GM12878 (cell line): ENCODE measurements at regions of chr17 and their contacts with region 1.

Region 1: DNA sequence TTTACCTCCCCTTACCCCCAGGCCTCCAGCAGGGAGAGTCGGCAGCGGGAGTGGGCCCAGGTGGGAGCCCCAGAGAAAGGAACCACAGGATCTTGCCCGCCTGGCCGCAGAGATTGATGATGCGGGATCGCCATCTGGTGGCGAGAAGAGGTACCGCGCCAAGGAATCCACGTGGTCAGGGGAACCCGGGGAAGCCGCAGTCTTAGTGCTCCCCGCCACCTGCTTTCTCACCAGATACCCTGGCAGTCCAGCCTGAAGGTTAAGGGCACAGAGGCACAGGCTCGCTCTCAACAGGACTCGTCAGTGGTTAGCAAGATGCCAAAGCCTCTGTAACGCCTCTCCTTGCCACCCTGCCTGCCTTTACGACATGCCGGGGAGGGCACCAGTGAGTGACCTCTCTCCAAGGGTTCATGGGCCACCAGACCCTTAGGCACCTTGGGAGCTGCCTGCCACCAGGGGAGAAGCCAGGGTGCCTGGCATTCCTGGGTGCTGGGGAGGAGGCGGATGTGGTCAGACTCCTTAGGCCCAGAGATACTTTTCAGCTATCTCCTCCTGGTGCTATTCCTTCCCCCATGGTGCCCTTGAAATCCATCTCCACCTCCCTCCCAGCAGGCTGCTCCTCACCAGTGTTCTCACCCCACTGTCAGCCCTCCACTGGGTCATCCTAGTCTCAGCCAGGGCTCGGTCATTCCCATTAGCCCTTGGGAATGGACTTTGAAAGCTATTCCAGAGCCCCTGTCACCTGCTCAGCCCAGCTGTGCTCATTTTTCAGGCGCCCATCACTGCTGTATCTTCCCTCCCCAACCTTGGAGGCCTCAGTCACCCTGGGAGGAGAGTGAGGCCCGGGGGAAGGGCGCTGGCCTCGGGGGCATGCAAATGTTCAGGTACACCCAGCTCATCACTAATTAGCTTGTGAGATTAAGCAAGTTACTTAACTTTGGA is 5.5 kb upstream of the RHBDF2 start:
- DNase-seq: peak; percentile 40
- ATAC-seq: peak; percentile 92
- H3K4me3 ChIP-seq: no peak overlapping the region
- H3K27ac ChIP-seq: no peak overlapping the region
- H3K4me1 ChIP-seq: peaks cover 9% of the 10 kb centered on the region
- H3K27me3 ChIP-seq: no peaks in the 10 kb centered on the region; a peak in 1 of 4 replicates
- CTCF ChIP-seq: peak; percentile 89 to 99 (median 92); a peak in 5 of 6 replicates
- EP300 ChIP-seq: no peak
- POLR2A ChIP-seq: no peak
- RAD21 ChIP-seq: peak; percentile 97

Region 2: GRCh38 chr17:76307299-76307965 is 199.2 kb before region 1 on chr17:
- CTCF ChIA-PET with region 1: interaction called, 3 read pairs
- POLR2A ChIA-PET with region 1: no interaction called
- RAD21 ChIA-PET with region 1: interaction called, 3 read pairs
- SMC1A ChIA-PET with region 1: interaction called, 3 read pairs
- in situ Hi-C with region 1: loop called (anchors 5 kb)
- intact Hi-C with region 1: loop called (anchors 2 kb)
- DNase-seq: no peak
- ATAC-seq: no peak
- H3K4me3 ChIP-seq: no peak overlapping the region
- H3K27ac ChIP-seq: no peak overlapping the region
- H3K4me1 ChIP-seq: no peaks in the 10 kb centered on the region
- H3K27me3 ChIP-seq: no peaks in the 10 kb centered on the region
- CTCF ChIP-seq: no peak
- EP300 ChIP-seq: no peak
- POLR2A ChIP-seq: no peak
- RAD21 ChIP-seq: no peak

Region 3: GRCh38 chr17:76408052-76408849 is 98.4 kb before region 1 on chr17:
- CTCF ChIA-PET with region 1: interaction called, 26 read pairs
- POLR2A ChIA-PET with region 1: no interaction called
- RAD21 ChIA-PET with region 1: no interaction called
- SMC1A ChIA-PET with region 1: interaction called, 9 read pairs
- in situ Hi-C with region 1: loop called (anchors 5 kb)
- intact Hi-C with region 1: loop called (anchors 1 kb)
- DNase-seq: no peak
- ATAC-seq: peak; percentile 91
- H3K4me3 ChIP-seq: no peak overlapping the region
- H3K27ac ChIP-seq: no peak overlapping the region
- H3K4me1 ChIP-seq: peaks cover 20% of the 10 kb centered on the region
- H3K27me3 ChIP-seq: no peaks in the 10 kb centered on the region
- CTCF ChIP-seq: peak; percentile 87 to 96 (median 91)
- EP300 ChIP-seq: no peak
- POLR2A ChIP-seq: no peak
- RAD21 ChIP-seq: peak; percentile 82

Region 4: DNA sequence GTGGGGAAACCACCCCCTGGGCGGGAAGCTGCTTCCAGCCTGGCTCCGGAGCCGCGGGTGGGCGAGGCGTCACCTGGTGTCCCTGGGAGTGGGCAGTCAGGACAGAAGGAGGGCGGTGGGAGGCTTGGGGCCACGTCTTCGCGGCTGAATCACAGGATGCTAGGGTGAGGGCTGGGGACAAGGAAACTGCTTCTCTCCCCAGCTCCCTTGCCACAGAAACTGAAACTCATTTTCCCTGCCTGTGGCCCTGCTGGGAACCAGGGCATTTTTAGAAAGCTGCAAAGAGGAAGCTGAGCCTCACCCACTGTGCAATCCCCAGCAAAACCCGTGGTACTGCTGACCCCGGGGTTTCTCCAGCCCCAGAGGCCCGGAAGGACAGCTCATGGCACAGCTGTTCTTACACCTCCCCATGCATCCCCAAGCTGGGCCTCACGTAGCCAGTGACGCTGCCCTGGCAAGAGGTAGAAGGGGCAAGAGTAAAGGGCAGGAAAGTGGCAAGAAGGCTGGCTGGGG is 13.6 kb before region 1 on chr17:
- CTCF ChIA-PET with region 1: interaction called, 35 read pairs
- POLR2A ChIA-PET with region 1: interaction called, 27 read pairs
- RAD21 ChIA-PET with region 1: interaction called, 9 read pairs
- SMC1A ChIA-PET with region 1: interaction called, 115 read pairs
- in situ Hi-C with region 1: no loop called
- intact Hi-C with region 1: no loop called
- DNase-seq: peak; percentile 80
- ATAC-seq: peak; percentile 79
- H3K4me3 ChIP-seq: peak overlapping the region; percentile 47; the same call in 1 of the 2 replicates
- H3K27ac ChIP-seq: peak overlapping the region; percentile 80
- H3K4me1 ChIP-seq: peaks cover 67% of the 10 kb centered on the region
- H3K27me3 ChIP-seq: no peaks in the 10 kb centered on the region
- CTCF ChIP-seq: no peak
- EP300 ChIP-seq: no peak; a peak in 1 of 4 replicates
- POLR2A ChIP-seq: peak; percentile 7; the same call in 1 of the 2 replicates
- RAD21 ChIP-seq: no peak

Region 5: DNA sequence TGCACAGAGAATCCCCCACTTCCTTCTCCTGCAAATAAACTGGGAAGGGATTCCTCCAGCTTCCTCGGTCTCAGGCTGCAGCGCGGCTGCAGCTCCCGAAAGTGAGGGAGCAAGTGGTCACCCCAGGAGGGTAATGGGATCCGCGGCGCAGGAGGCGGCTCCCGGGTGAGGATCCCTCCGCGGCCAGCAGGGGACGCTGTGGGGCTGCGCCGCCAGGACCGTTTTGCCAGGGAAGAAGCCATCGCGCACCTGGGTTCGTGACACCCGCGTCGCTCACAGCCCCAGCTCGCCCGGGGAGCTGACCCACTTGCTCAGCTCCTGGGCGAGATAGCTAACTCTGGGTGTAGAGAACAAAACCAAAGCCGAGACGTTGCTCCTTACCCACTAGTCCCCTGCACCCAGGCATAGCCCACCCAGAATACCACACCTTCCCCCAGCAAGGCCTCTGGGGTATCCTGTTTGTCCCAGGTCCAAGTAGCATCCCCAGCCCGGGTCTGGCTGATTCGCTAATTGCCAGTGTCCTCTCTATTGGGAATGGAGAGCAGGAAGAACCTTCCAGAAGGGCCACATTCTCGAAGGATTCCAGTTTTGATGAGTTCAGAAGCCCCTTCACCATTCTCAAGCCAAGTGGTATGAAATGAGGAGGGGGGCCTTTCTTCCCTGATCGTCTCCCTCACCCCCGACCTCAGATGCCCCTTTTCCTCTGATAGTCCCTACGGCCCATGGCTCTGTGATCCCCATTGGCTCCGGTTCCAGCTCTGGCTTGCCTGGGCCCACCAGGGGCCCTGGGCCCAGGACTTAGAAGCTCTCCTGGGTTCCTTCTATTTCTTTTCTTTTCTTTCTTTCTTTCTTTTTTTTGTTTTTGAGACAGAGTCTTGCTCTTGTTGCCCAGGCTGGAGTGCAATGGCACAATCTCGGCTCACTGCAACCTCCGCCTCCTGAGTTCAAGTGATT is 16.7 kb after region 1 on chr17:
- CTCF ChIA-PET with region 1: interaction called, 12 read pairs
- POLR2A ChIA-PET with region 1: interaction called, 3 read pairs
- RAD21 ChIA-PET with region 1: interaction called, 7 read pairs
- SMC1A ChIA-PET with region 1: interaction called, 3 read pairs
- in situ Hi-C with region 1: no loop called
- intact Hi-C with region 1: no loop called
- DNase-seq: no peak
- ATAC-seq: peak; percentile 75
- H3K4me3 ChIP-seq: no peak overlapping the region
- H3K27ac ChIP-seq: no peak overlapping the region
- H3K4me1 ChIP-seq: peaks cover 10% of the 10 kb centered on the region
- H3K27me3 ChIP-seq: no peaks in the 10 kb centered on the region
- CTCF ChIP-seq: peak; percentile 99 to 100 (median 99); a peak in 5 of 6 replicates
- EP300 ChIP-seq: no peak
- POLR2A ChIP-seq: no peak
- RAD21 ChIP-seq: peak; percentile 89

Region 6: GRCh38 chr17:76537578-76538280 is 31.1 kb after region 1 on chr17 and contains the start of gene CYGB:
- CTCF ChIA-PET with region 1: no interaction called
- POLR2A ChIA-PET with region 1: no interaction called
- RAD21 ChIA-PET with region 1: no interaction called
- SMC1A ChIA-PET with region 1: no interaction called
- in situ Hi-C with region 1: no loop called
- intact Hi-C with region 1: no loop called
- DNase-seq: no peak
- ATAC-seq: no peak
- H3K4me3 ChIP-seq: no peak within 1 kb of the TSS
- H3K27ac ChIP-seq: no peak within 1 kb of the TSS
- H3K4me1 ChIP-seq: no peaks in the 10 kb centered on the region
- H3K27me3 ChIP-seq: peaks cover 5 to 6% of the 10 kb centered on the region in 2 experiments
- CTCF ChIP-seq: no peak
- EP300 ChIP-seq: no peak
- POLR2A ChIP-seq: no peak
- RAD21 ChIP-seq: no peak
- polyA plus RNA-seq, gene CYGB: not detected

Region 7: DNA sequence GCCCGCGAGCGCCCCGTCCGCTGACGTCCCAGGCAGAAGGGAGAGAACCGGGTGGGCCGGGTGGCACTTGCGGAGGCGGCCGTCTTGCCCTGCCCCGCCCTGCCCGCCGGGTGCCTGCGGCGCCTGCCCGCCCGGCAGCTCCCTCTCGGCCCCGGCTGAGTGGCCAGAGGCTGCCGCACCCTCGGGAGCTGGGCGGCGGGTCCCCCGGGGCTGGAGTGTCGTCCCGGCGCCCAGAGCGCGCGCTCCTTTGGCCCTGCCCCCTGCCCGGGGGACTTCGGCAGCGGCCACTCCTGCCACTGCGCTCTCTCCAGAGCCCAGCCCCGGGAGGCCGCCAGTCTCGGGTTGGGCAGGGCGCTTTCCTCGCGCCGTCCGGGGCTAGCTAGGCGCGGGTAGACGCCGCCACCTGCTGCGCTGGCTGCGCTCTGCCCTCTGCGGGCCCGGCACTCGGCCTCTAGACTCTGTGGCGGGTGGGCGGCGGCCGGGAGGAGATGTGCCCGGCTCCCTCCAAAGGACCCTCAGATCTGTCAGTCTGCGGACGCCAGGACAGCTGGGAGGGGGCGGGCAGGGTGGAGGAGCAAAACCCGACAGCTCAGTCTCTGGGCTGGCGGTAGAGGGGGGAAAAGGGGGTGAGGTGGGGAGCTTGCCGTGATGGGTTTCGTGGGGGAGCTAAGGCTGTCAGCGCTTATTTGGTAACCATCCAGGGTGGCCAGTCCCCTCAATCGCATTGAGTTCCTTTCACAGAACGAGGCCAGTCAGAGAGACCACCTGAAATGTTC is 79.3 kb after region 1 on chr17 and contains the start of gene ST6GALNAC2:
- CTCF ChIA-PET with region 1: no interaction called
- POLR2A ChIA-PET with region 1: no interaction called
- RAD21 ChIA-PET with region 1: no interaction called
- SMC1A ChIA-PET with region 1: no interaction called
- in situ Hi-C with region 1: no loop called
- intact Hi-C with region 1: no loop called
- DNase-seq: no peak
- ATAC-seq: peak; percentile 86
- H3K4me3 ChIP-seq: peak within 1 kb of the TSS; percentile 63; the same call in 1 of the 2 replicates
- H3K27ac ChIP-seq: no peak within 1 kb of the TSS
- H3K4me1 ChIP-seq: peaks cover 6% of the 10 kb centered on the region
- H3K27me3 ChIP-seq: peaks cover 3 to 9% of the 10 kb centered on the region in 2 experiments; a peak in 3 of 4 replicates
- CTCF ChIP-seq: peak; percentile 31 to 49 (median 46); a peak in 4 of 6 replicates
- EP300 ChIP-seq: no peak
- POLR2A ChIP-seq: no peak
- RAD21 ChIP-seq: peak; percentile 34; the same call in 1 of the 2 replicates
- polyA plus RNA-seq, gene ST6GALNAC2: not detected

Region 8: GRCh38 chr17:76614912-76615617 is 108.4 kb after region 1 on chr17:
- CTCF ChIA-PET with region 1: no interaction called
- POLR2A ChIA-PET with region 1: no interaction called
- RAD21 ChIA-PET with region 1: no interaction called
- SMC1A ChIA-PET with region 1: no interaction called
- in situ Hi-C with region 1: no loop called
- intact Hi-C with region 1: no loop called
- DNase-seq: no peak
- ATAC-seq: no peak
- H3K4me3 ChIP-seq: no peak overlapping the region
- H3K27ac ChIP-seq: no peak overlapping the region
- H3K4me1 ChIP-seq: no peaks in the 10 kb centered on the region
- H3K27me3 ChIP-seq: no peaks in the 10 kb centered on the region
- CTCF ChIP-seq: no peak
- EP300 ChIP-seq: no peak
- POLR2A ChIP-seq: no peak
- RAD21 ChIP-seq: no peak

Region 9: DNA sequence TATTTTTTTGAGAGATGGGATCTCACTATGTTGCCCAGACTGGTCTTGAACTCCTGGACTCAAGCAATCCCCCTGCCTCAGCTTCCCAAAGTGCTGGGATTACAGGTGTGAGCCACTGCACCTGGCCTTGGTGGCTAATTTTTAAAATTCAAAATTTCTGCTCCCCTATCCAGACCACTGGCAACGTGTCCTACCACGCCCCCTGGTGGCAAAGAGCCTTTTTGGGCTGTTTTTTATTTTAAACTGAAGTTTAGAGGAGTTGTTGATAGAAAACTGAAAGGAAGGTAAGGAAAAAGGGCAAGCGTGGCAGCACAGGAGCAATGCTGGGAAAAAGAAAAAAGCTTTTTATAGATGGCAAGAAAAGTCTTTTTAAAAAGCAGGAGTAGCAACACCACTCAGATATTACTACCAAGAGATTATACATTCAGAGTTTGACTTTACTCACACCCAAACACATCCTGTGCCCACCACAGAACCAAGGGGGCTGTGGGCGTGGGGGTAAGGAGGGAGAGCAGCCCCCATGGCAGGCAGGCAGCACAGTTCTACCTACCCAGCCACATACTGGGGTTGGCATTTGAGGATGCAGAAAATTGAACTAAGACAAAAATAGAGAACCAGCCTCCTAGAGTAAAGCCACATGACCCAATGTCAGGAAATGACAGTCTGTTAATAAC is 208.3 kb after region 1 on chr17:
- CTCF ChIA-PET with region 1: no interaction called
- POLR2A ChIA-PET with region 1: no interaction called
- RAD21 ChIA-PET with region 1: no interaction called
- SMC1A ChIA-PET with region 1: no interaction called
- in situ Hi-C with region 1: no loop called
- intact Hi-C with region 1: no loop called
- DNase-seq: no peak
- ATAC-seq: peak; percentile 71
- H3K4me3 ChIP-seq: no peak overlapping the region
- H3K27ac ChIP-seq: no peak overlapping the region
- H3K4me1 ChIP-seq: peaks cover 8% of the 10 kb centered on the region
- H3K27me3 ChIP-seq: no peaks in the 10 kb centered on the region; a peak in 1 of 4 replicates
- CTCF ChIP-seq: peak; percentile 68 to 77 (median 69)
- EP300 ChIP-seq: no peak
- POLR2A ChIP-seq: no peak
- RAD21 ChIP-seq: peak; percentile 71